ENCODE measurements at regions of chr19 and their contacts with region 1.

Region 1: GRCh38 chr19:14059093-14059480 is 2.8 kb downstream of the PALM3 start:
- DNase-seq: no peak
- ATAC-seq: no peak
- H3K4me3 ChIP-seq: no peak overlapping the region
- H3K27ac ChIP-seq: no peak overlapping the region
- H3K4me1 ChIP-seq: peaks cover 21% of the 10 kb centered on the region
- H3K27me3 ChIP-seq: no peaks in the 10 kb centered on the region
- CTCF ChIP-seq: peak; percentile 94

Region 2: GRCh38 chr19:14107581-14108461 is 48.7 kb after region 1 on chr19:
- CTCF ChIA-PET with region 1: no interaction called
- POLR2A ChIA-PET with region 1: no interaction called
- intact Hi-C with region 1: no loop called
- DNase-seq: peak; percentile 18
- ATAC-seq: peak; percentile 53; the same call in 1 of the 2 replicates
- H3K4me3 ChIP-seq: no peak overlapping the region
- H3K27ac ChIP-seq: no peak overlapping the region
- H3K4me1 ChIP-seq: no peaks in the 10 kb centered on the region
- H3K27me3 ChIP-seq: no peaks in the 10 kb centered on the region
- CTCF ChIP-seq: no peak

Region 3: DNA sequence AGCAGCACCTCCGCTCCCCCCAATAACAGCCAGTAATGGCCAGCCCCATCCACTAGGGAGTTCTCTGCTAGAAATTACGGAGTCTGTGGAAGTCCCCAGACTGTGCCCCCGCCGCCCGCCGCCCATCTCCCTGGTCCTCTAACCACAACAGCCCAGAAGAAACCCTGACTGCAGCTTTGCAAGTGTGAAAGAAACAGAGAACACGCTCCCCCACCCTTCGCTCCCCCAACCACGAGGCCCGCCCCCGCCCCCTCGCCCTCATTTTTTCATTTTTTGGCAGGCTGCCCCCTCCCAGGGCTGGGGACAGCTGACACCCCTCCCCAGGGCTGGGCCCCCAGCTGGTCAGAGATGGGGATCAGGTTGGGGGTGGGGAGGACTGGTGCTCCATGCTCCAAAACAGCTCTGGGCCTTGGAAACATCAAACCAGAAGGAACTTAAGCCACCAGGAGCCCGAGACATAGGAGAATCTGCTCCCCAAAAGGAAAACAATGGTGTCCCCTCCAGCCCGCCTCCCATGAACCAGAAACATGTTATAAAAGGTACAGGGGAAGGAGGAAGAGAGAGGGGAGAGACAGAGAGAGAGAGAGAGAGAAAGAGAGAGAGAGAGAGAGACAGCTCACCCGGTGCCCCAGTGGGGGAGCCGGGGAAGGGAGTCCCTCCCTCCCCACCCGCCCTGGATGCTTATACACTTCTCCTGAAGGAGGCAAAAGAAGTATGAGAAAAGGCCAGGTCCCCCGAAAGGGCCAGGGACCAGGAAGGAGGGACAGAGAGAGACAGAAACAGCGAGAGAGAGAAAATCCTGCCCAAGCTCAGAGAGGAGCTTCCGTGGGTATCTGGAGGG is 107.1 kb after region 1 on chr19:
- CTCF ChIA-PET with region 1: interaction called, 11 read pairs
- POLR2A ChIA-PET with region 1: no interaction called
- intact Hi-C with region 1: no loop called
- DNase-seq: no peak
- ATAC-seq: no peak
- H3K4me3 ChIP-seq: no peak overlapping the region
- H3K27ac ChIP-seq: no peak overlapping the region
- H3K4me1 ChIP-seq: no peaks in the 10 kb centered on the region
- H3K27me3 ChIP-seq: no peaks in the 10 kb centered on the region
- CTCF ChIP-seq: no peak

Measured in PC-3 (cell line).